CD14-positive monocyte (primary cell): ENCODE measurements at regions of chr10 and their contacts with region 1.

Region 1: DNA sequence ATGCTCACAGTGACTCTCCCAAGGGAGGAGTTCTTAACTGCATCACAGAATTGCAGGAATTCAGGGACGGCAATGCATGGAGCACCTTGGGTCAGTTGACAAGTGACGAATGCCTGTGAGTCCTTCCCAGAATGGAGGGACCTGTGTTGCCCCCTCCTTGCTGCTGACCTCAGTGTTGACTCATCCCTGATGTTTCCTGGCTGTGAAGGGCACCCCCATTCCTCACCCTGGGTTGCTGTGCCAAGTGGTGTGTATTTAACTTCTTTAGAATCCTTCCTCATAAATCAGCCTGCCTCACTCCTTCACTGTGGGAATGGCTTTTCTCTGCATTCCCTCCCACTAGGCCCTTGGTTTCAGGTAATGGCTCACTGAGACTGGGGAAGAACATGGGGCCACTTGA is 98.9 kb downstream of the LRMDA start:
- DNase-seq: peak; percentile 16 to 76 (median 28)
- H3K4me3 ChIP-seq: no peak overlapping the region
- H3K4me3 Mint-ChIP-seq: no peak overlapping the region
- H3K27ac ChIP-seq: no peak overlapping the region
- H3K27ac Mint-ChIP-seq: peak overlapping the region in 2 of 7 donors; percentile 33 to 83
- H3K4me1 ChIP-seq: peaks cover 49 to 50% of the 10 kb centered on the region in 2 donors
- H3K4me1 Mint-ChIP-seq: peaks cover 50% of the 10 kb centered on the region
- H3K27me3 ChIP-seq: no peaks in the 10 kb centered on the region
- H3K27me3 Mint-ChIP-seq: peaks cover 0 to 4% (median 0%) of the 10 kb centered on the region in 3 donors
- CTCF ChIP-seq: no peak

Region 2: GRCh38 chr10:75469006-75469616 is 61.2 kb before region 1 on chr10:
- intact Hi-C with region 1: loop called in 1 of 2 experiments (anchors 10 kb)
- DNase-seq: peak; percentile 87 to 95 (median 95)
- H3K4me3 ChIP-seq: peak overlapping the region in 1 of 3 experiments; percentile 26
- H3K4me3 Mint-ChIP-seq: no peak overlapping the region
- H3K27ac ChIP-seq: peak overlapping the region; percentile 36 to 73
- H3K27ac Mint-ChIP-seq: peak overlapping the region; percentile 74 to 94 (median 91)
- H3K4me1 ChIP-seq: peaks cover 45 to 51% of the 10 kb centered on the region in 2 donors
- H3K4me1 Mint-ChIP-seq: peaks cover 59% of the 10 kb centered on the region
- H3K27me3 ChIP-seq: no peaks in the 10 kb centered on the region
- H3K27me3 Mint-ChIP-seq: no peaks in the 10 kb centered on the region
- CTCF ChIP-seq: no peak

Region 3: DNA sequence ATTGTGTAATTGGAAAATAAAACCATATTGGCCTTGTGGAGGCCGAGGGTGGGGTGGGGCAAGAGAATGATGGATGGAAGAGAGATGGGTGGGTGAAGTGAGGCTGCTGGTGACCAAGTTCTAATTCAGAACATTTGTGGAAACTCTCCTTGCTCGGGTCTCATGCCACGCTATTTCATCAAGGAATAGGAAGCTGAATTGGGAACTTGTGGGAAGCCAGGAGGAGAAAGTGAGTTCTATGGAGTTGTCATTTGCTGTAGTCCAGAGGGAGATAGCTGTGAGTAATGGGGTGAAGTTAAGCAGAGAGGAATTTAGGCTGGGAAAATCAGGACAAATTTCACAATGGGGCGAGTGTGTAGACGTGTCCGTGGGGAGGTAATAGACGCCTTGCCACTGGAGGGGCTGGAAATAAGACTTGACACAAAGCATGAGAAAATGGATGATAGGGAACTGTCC is 240.3 kb after region 1 on chr10:
- intact Hi-C with region 1: no loop called
- DNase-seq: no peak
- H3K4me3 ChIP-seq: no peak overlapping the region
- H3K4me3 Mint-ChIP-seq: no peak overlapping the region
- H3K27ac ChIP-seq: peak overlapping the region in 1 of 2 donors; percentile 49
- H3K27ac Mint-ChIP-seq: peak overlapping the region in 3 of 7 donors; percentile 13 to 37 (median 36)
- H3K4me1 ChIP-seq: peaks cover 17 to 19% of the 10 kb centered on the region in 2 donors
- H3K4me1 Mint-ChIP-seq: peaks cover 31% of the 10 kb centered on the region
- H3K27me3 ChIP-seq: no peaks in the 10 kb centered on the region
- H3K27me3 Mint-ChIP-seq: no peaks in the 10 kb centered on the region
- CTCF ChIP-seq: no peak